GM10248 (cell line): ENCODE measurements at regions of chr3 and their contacts with region 1.

Region 1: GRCh38 chr3:71984843-71985613 is 200.1 kb upstream of the PROK2 start:
- DNase-seq: peak; percentile 58
- CTCF ChIP-seq: no peak

Region 2: DNA sequence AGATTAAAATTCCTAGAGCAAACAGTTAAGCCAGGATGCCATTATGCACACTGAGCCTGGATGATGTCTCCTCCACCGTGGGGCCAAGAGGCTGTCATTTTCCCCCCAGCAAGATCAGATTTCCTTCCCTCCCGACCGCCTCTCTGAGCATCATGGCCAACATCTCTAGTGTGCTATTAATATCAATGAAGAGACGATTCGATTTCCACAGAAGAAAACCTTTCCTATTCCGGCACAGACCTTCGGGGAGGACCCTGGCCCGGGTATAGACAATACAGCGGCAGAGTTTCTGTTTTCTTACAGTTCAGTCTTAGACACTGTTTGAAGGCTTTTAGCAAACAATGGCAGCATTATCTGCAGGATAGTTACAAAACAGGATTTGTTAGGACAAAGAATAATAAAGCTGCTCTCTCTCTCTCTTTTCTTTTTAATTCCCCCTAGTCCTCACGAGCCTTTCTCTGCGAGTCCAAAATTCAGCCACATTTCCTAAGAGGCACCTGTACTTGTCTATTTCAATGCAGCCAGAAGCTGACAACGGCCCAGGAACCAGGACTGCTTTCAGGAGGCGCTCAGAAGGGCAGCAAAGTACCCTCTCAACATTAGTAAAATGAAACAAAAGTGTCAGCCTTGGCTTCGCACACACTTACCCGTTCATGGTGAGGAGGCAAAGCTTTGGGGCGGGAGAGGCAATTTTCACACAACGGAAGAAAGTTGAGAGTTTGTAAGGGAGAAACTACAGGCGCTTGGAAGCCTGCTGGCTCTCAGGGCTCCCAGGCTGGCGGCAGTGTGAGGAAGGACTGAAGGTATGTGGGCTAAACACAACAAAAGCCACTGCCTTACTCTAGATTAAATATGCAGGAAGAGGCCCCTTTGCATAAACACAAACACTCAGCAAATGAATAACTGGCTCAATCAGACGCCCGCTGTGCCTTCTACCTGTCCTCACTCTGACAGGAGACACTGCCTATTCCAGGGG is 679.5 kb before region 1 on chr3:
- CTCF ChIA-PET with region 1: no interaction called
- POLR2A ChIA-PET with region 1: no interaction called
- DNase-seq: no peak
- CTCF ChIP-seq: no peak

Region 3: DNA sequence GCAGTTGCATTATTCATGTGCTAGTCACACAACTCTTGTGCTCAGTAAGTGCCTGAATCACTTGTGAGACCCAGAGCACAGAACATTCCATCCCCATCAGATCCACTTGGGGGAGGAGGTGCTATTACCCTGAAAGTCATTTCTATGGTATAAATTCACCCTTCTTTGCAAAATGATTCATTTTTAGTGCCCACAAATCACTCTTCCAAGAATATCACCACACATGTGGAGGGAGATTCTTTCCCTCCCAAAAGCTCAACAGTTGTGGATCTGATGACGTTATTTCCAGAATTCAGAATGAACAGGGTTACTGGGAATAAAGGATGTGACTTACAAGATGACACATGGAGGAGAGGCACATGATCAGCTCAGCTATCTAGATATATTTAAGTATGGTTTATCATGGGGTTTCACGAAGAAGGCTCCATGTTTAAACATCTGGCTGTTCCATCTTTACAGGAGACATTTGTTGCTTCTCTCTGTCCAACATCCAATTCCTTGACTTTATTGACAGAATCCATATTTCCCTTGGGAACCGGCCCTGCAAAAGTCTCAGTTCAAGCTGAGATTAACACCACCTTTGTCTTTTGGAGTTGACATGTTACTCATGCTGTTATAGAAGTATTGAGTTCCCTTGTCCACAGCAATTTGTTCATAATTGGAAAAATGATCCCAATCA is 14.1 kb after region 1 on chr3:
- CTCF ChIA-PET with region 1: interaction called, 13 read pairs
- POLR2A ChIA-PET with region 1: no interaction called
- DNase-seq: no peak
- CTCF ChIP-seq: no peak

Region 4: GRCh38 chr3:72004749-72005292 is 19.8 kb after region 1 on chr3:
- CTCF ChIA-PET with region 1: interaction called, 13 read pairs
- POLR2A ChIA-PET with region 1: no interaction called
- DNase-seq: no peak
- CTCF ChIP-seq: no peak

Region 5: DNA sequence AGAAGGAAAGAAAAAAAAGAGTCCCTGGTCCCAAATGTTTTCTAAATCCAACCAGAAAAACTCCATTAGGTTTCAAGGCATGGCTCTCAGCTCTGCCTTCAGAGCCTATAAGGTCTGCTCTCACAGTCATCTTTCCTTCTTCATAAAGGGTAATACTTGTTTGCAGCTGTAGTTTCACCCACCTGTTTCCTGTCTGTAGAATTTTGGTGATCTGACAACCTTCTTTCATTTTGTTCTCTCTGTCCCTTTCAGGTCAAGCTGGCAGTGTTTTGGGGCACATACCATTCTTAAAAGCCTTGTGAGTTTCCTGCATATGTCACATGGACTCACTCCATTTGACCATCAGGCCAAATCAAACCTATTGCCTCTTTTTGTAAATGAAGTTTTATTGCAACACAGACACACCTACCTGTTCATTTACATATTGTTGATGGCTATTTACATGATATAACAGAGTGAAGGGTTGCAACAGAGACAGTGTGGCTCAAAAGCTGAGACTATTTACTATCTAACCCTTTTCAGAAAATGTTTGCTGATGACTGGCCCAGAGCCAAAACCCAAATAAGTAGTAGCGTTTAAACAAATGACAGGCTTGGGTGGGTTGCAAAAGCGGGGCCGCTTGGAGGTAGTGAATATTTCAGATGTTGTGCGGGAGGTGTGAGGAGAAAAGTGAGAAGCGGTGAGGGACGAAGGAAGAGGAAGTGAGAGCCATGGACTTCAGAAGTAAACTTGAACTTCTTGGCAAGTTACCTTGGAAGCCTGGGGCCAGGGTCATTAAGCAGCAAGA is 92.6 kb after region 1 on chr3:
- CTCF ChIA-PET with region 1: interaction called, 4 read pairs
- POLR2A ChIA-PET with region 1: interaction called, 11 read pairs
- DNase-seq: no peak
- CTCF ChIP-seq: no peak